ENCODE measurements at regions of chr7 and their contacts with region 1.

Region 1: DNA sequence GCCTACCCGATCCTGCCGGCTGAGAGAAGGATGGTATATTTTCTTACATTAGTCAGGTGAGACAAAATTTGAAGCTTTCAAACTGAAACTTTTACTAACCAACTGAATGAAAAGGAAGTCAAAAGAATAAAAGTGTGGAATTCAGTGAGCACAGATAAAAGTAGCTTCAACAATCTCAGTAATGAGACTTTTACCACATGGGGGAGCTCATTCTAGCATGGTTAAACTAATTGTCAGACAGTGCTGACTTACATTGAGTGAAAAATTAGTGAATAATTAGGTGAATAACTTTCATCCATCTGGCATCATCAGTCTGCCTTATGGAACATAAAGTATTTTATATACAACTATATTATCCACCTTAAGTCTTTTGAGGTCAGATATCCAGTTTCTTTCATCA is 8.4 kb downstream of the FAM237B start:
- DNase-seq: no peak
- ATAC-seq: no peak
- H3K4me3 ChIP-seq: no peak overlapping the region
- H3K27ac ChIP-seq: no peak overlapping the region
- H3K4me1 ChIP-seq: no peaks in the 10 kb centered on the region
- H3K27me3 ChIP-seq: peaks cover 0 to 12% (median 0%) of the 10 kb centered on the region in 7 donors
- CTCF ChIP-seq: peak in 4 of 9 donors; percentile 17 to 46 (median 30)

Region 2: DNA sequence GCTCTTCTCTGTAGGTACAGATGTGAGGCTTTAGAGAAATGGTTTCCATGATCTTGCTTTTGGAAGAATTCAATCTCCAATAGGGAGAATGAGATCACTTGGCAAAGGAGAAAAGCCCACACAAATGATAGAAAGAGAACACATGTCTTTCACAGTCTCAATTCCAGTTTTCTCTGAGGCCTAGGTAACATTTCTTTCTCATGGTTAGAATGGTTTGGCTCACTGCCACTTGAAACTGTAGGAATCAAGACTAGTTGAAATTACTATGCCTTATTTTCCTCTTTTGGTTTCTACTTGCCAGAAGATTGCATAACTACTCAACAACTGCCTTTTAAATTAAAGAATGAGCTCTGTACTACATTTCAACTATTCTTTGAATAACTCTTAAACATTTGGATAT is 1240.7 kb before region 1 on chr7:
- intact Hi-C with region 1: loop called in 1 of 10 experiments (anchors 10 kb)
- DNase-seq: no peak
- ATAC-seq: no peak
- H3K4me3 ChIP-seq: no peak overlapping the region
- H3K27ac ChIP-seq: no peak overlapping the region
- H3K4me1 ChIP-seq: no peaks in the 10 kb centered on the region
- H3K27me3 ChIP-seq: no peaks in the 10 kb centered on the region
- CTCF ChIP-seq: no peak

Region 3: DNA sequence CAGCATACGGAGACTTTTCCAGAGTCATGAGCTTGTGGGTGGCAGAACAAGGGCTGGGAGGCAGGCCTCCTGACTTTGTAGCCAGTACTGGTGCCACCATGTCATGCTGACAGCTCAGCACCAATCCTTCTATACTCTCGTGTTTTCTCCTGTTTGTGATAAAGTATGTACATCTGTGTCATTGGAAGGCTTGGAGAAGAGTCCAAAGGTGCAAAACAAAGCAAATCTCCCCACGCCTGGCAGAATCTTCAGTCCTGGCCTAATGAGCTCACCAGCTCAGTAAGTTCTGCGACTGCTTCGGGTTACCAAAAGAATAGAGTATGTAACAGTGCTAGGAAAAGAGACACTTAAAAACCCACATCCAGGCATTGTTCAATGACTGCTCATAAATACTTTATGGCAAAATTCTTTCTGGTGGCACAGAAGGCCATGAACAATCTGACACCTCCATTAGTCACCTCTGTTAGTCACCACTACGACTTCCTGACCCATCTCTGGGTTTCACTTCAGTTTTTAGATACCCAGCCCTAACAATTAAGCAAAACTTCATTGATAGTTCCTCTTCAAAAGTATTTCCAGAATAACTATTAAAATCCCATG is 134.0 kb before region 1 on chr7:
- intact Hi-C with region 1: no loop called
- DNase-seq: no peak
- ATAC-seq: no peak
- H3K4me3 ChIP-seq: no peak overlapping the region
- H3K27ac ChIP-seq: no peak overlapping the region
- H3K4me1 ChIP-seq: peaks cover 0 to 11% (median 0%) of the 10 kb centered on the region in 9 donors
- H3K27me3 ChIP-seq: no peaks in the 10 kb centered on the region
- CTCF ChIP-seq: no peak

Region 4: DNA sequence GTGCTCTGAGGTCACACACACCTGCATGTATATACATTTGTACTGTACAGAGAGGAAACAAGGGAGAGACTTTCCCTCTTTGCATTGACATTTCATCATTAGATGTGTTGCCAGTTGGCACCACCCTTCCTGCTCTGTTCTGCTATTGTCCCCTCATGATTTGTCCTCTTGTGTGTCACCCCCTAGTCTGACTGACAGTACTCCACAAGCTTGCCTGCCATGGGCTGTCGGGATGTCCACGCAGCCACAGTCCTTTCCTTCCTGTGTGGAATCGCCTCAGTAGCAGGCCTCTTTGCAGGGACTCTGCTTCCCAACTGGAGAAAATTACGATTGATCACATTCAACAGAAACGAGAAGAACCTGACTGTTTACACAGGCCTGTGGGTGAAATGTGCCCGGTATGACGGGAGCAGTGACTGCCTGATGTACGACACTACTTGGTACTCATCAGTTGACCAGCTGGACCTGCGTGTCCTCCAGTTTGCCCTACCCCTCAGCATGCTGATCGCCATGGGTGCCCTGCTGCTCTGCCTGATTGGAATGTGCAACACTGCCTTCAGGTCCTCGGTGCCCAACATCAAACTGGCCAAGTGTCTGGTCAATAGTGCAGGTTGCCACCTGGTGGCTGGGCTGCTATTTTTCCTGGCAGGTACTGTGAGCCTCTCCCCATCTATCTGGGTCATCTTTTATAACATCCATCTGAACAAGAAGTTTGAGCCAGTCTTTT is 99.9 kb after region 1 on chr7:
- intact Hi-C with region 1: loop called in 1 of 10 experiments (anchors 10 kb)
- DNase-seq: no peak
- ATAC-seq: peak in 5 of 8 donors; percentile 30 to 69 (median 36)
- H3K4me3 ChIP-seq: no peak overlapping the region
- H3K27ac ChIP-seq: peak overlapping the region in 1 of 10 donors; percentile 40
- H3K4me1 ChIP-seq: peaks cover 0 to 50% (median 13%) of the 10 kb centered on the region in 9 donors
- H3K27me3 ChIP-seq: no peaks in the 10 kb centered on the region
- CTCF ChIP-seq: peak in 3 of 9 donors; percentile 19 to 26 (median 20)

Region 5: DNA sequence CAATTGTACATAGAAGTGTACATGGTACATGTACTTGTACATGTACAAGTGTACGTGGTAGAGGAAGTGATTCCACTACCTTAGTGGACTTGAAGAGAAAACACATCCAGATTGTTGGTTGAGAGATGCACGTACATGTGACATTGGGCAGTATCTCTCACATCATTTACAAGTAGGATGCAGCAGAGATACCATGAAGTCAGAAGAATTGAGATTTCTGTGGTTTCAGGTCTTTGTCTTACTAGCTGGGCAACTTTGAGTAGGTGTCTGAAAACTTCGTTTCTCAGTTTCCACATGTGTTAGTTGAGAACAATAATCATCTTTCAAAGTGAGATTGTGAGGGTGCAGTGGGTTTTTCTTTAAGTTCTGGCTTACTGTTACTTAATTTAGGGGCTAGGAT is 112.0 kb after region 1 on chr7:
- intact Hi-C with region 1: loop called in 6 of 10 experiments (anchors 5 to 10 kb)
- DNase-seq: no peak
- ATAC-seq: no peak
- H3K4me3 ChIP-seq: no peak overlapping the region
- H3K27ac ChIP-seq: no peak overlapping the region
- H3K4me1 ChIP-seq: peaks cover 0 to 14% (median 0%) of the 10 kb centered on the region in 9 donors
- H3K27me3 ChIP-seq: no peaks in the 10 kb centered on the region
- CTCF ChIP-seq: no peak